ENCODE measurements at regions of chr12 and their contacts with region 1.

Region 1: DNA sequence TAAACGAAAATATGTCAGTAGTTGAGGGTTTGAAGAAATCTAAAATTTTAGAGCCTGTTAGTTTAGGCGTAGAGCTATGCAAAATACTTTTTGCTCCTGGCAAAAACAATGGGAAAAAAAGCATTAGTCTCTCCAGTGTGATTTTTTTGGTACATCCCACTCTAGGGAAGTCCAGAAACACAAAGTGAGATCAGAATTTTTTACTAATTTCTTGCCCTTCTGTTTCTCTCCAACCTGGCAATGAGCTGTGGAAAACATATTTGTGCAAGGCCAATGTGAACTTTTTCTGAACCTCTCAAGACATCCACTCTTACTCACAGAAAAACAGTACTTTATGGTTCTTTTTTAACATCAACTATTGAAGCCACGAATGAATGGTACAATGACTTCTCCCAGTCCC is 56.9 kb upstream of the DCN start:
- DNase-seq: no peak
- H3K4me3 ChIP-seq: no peak overlapping the region
- H3K27ac ChIP-seq: no peak overlapping the region
- H3K4me1 ChIP-seq: no peaks in the 10 kb centered on the region
- H3K27me3 ChIP-seq: peaks cover 3% of the 10 kb centered on the region
- CTCF ChIP-seq: no peak

Region 2: GRCh38 chr12:90575995-90576394 is 663.5 kb before region 1 on chr12:
- CTCF ChIA-PET with region 1: no interaction called
- dilution Hi-C with region 1: no loop called
- in situ Hi-C with region 1: no loop called
- intact Hi-C with region 1: no loop called
- DNase-seq: no peak
- H3K4me3 ChIP-seq: no peak overlapping the region
- H3K27ac ChIP-seq: no peak overlapping the region
- H3K4me1 ChIP-seq: peaks cover 13% of the 10 kb centered on the region
- H3K27me3 ChIP-seq: no peaks in the 10 kb centered on the region
- CTCF ChIP-seq: no peak

Region 3: GRCh38 chr12:91189516-91189915 is 50.0 kb before region 1 on chr12:
- CTCF ChIA-PET with region 1: no interaction called
- dilution Hi-C with region 1: no loop called
- in situ Hi-C with region 1: no loop called
- intact Hi-C with region 1: loop called (anchors 2 kb)
- DNase-seq: peak; percentile 33
- H3K4me3 ChIP-seq: no peak overlapping the region
- H3K27ac ChIP-seq: no peak overlapping the region
- H3K4me1 ChIP-seq: no peaks in the 10 kb centered on the region
- H3K27me3 ChIP-seq: no peaks in the 10 kb centered on the region
- CTCF ChIP-seq: no peak